Left colon (tissue), 2 donors: ENCODE measurements at regions of chr18 and their contacts with region 1.

Region 1: DNA sequence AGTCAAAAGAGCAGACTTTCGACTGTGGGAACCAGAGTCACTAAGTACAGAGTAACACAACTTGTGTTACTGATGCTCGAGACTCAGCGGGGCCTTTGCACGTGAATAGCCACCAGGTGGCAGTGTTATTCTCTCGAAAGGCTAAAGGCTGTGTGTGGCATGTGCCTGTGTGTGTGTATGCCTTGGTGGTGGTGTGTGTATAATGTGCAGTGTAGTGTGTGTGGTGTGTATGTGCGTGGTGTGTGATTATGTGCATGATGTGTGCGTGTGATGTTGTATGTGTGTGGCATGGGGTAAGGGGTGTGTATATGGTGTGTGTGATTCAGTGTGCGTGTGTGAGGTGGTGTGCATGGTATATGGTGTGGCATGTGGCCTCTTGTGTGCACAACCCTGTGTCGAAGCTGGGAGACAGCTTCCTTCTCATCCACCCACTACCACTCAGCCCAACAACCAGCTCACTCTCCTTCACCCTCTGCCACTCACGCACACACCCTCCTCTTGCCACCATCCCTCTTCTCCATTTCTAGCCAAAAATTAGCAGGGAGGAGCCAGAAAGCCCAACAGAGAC is 83.0 kb upstream of the ZNF532 start:
- DNase-seq: peak; percentile 62 to 70
- ATAC-seq: peak; percentile 77

Region 2: DNA sequence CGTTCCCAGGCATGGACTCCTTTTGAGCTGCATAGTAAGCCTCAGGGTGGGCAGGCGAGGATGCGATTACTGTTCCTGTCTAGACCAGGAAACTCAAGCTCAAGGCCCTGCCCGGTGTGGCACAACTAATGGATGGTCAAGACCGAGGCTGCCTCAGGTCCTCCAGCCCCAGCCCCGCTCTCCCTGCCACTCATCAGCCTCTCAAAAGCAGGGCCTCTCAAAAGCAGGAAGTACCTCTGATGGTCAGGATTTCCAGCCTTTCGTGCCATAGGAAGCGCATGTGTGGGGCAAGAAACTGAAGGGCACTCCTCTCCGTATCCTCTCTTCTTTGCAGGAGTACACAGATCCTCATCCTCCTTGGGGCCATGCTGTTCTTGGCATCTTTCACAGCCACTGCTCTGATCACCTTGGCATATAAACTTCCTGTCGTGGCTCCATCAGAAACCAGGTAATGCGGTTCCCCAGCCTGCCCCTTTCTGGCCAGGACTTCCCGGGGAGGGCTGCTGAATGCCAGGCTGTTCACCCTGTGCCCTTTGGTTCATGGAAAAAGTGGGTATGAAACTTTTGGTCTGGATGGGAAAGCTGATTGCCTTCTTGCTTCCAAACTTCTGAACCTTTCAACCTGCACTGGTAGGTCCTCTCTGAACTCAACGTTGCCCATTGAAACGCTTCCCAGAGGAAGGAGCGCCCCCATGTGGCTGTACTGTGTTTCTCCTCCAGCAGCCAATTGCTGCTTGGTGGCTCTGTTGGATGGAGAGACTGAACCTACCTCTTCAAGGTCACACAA is 275.2 kb after region 1 on chr18:
- intact Hi-C with region 1: loop called (anchors 5 kb)
- DNase-seq: peak; percentile 59 to 81
- ATAC-seq: peak; percentile 72

Region 3: GRCh38 chr18:59070181-59070912 is 288.6 kb after region 1 on chr18:
- intact Hi-C with region 1: loop called in 1 of 2 experiments (anchors 5 kb)
- DNase-seq: peak; percentile 66 to 92
- ATAC-seq: peak; percentile 88